Calu3 (cell line): ENCODE measurements at regions of chr6 and their contacts with region 1.

Region 1: GRCh38 chr6:49570474-49571079 is 20.1 kb downstream of the C6orf141 start:
- DNase-seq: no peak
- H3K4me3 Mint-ChIP-seq: no peak overlapping the region
- H3K27ac Mint-ChIP-seq: peak overlapping the region; percentile 51
- H3K4me1 Mint-ChIP-seq: peaks cover 40% of the 10 kb centered on the region
- H3K27me3 Mint-ChIP-seq: no peaks in the 10 kb centered on the region
- CTCF ChIP-seq: no peak

Region 2: GRCh38 chr6:49550492-49551077 is 20.0 kb before region 1 on chr6 and contains the start of gene C6orf141:
- CTCF ChIA-PET with region 1: interaction called, 9 read pairs
- intact Hi-C with region 1: loop called (anchors 2 kb)
- DNase-seq: peak; percentile 83
- H3K4me3 Mint-ChIP-seq: peak within 1 kb of the TSS; percentile 79
- H3K27ac Mint-ChIP-seq: peak within 1 kb of the TSS; percentile 75
- H3K4me1 Mint-ChIP-seq: peaks cover 21% of the 10 kb centered on the region
- H3K27me3 Mint-ChIP-seq: no peaks in the 10 kb centered on the region
- CTCF ChIP-seq: no peak
- total RNA-seq, gene C6orf141: 60.9 and 74.2 TPM in 2 replicates

Region 3: DNA sequence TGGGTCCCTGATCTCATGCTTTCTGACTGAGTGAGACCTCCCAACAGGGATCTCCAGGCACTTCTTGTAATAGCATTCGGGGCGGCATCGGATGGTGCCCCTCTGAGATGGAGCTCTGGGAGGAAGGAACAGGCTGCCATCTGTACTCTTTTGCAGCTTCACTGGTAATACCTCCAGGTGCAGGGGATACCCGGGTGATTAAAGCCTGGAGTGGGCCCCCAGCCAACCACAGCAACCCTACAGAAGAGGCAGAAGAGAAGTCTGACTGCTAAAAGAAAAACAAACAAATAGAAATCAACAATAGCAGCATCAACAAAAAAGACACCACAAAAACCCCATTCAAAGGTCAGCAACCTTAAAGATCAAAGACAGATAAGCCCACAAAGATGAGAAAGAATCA is 235.6 kb after region 1 on chr6:
- CTCF ChIA-PET with region 1: no interaction called
- intact Hi-C with region 1: no loop called
- DNase-seq: no peak
- H3K4me3 Mint-ChIP-seq: no peak overlapping the region
- H3K27ac Mint-ChIP-seq: no peak overlapping the region
- H3K4me1 Mint-ChIP-seq: no peaks in the 10 kb centered on the region
- H3K27me3 Mint-ChIP-seq: no peaks in the 10 kb centered on the region
- CTCF ChIP-seq: no peak